ENCODE measurements at regions of chr10 and their contacts with region 1.

Region 1: GRCh38 chr10:91006001-91006751 is 85.3 kb upstream of the ANKRD1 start:
- DNase-seq: peak; percentile 66
- H3K4me3 Mint-ChIP-seq: no peak overlapping the region
- H3K27ac Mint-ChIP-seq: no peak overlapping the region
- H3K4me1 Mint-ChIP-seq: peaks cover 9% of the 10 kb centered on the region
- H3K27me3 Mint-ChIP-seq: no peaks in the 10 kb centered on the region
- CTCF ChIP-seq: peak; percentile 68

Region 2: DNA sequence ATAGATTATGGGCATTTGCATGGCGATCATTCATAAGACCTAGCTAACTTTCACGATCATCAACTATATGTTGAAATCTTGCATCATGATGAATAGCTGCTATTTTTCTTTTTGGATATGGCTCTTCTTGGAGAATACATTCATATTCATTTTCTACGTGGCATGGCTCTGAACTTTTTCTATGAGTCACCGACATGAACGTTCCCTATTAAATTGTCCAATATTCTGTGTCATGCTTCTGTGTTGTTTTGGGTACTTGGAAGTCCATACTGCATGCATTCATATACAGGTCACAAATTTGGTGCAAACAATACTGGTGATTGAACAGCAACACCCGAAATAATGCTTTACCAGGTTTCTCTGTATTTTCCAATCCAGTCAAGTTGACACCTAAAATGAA is 47.4 kb before region 1 on chr10:
- CTCF ChIA-PET with region 1: no interaction called
- intact Hi-C with region 1: no loop called
- DNase-seq: no peak
- H3K4me3 Mint-ChIP-seq: no peak overlapping the region
- H3K27ac Mint-ChIP-seq: no peak overlapping the region
- H3K4me1 Mint-ChIP-seq: no peaks in the 10 kb centered on the region
- H3K27me3 Mint-ChIP-seq: peaks cover 7% of the 10 kb centered on the region
- CTCF ChIP-seq: no peak

Region 3: DNA sequence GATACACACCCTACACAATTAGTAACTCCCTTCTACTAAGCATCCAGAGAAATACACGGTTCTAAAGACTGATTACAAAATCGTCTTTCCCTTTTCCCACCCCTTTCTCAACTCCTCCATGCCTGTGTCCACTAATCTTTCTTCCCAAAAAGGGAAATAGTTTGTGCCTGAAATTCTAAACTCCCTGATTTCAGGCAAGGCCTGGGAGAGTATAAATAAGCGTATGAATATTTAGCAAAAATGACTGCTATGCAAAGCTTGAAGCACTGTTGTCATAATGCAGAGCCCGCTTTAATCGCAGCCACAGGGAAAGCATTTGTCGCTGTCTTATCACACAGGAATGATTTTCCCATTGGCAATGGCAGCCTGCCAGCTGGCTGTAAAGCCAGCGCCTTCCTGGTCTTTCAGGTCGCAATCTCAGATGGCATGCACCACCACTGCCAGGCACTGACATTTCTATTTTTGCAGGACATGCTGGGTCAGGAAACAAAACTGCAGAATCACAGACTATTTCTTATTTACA is 71.4 kb after region 1 on chr10:
- CTCF ChIA-PET with region 1: no interaction called
- intact Hi-C with region 1: loop called (anchors 5 kb)
- DNase-seq: peak; percentile 58
- H3K4me3 Mint-ChIP-seq: peak overlapping the region; percentile 25
- H3K27ac Mint-ChIP-seq: no peak overlapping the region
- H3K4me1 Mint-ChIP-seq: peaks cover 11% of the 10 kb centered on the region
- H3K27me3 Mint-ChIP-seq: peaks cover 83% of the 10 kb centered on the region
- CTCF ChIP-seq: no peak

Measured in Calu3 (cell line).